MCF 10A (cell line): ENCODE measurements at regions of chr2 and their contacts with region 1.

Region 1: DNA sequence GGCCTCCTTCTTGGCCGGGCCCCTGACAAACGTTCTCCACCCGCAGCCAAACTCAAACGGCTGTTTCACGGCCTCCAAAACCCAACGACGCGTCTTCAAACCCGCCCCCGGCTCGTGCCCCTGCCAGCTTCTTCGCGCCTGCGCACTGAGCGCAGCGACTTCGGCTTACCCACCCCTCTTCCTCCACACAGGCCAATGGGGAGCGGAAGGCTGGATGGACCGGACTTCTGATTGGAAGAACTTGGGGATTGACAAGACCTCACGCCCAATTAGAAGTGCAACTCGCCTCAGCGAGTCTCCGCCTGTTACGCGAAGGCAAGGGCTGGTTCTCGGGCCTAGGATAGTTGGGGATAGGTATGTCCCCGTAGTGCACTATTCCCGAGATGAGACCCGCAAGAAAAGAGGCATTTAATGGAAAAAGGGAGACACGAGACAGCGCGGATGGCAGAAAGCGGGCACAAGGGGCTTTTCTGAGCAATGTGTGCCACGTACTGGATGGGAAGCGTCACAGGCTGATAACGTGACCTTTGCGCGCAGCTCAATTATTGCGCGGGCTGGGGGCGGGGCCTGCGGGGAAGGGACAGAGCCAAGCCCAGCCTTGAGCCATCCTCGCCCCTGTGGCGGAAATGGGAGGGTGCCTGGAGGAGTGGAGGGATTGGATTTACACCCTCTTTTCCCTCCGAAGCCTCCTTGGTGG is at the start of gene LAPTM4A:
- DNase-seq: peak; percentile 100
- H3K4me3 Mint-ChIP-seq: no peak within 1 kb of the TSS
- H3K27ac Mint-ChIP-seq: no peak within 1 kb of the TSS
- H3K4me1 Mint-ChIP-seq: peaks cover 24% of the 10 kb centered on the region
- H3K27me3 Mint-ChIP-seq: no peaks in the 10 kb centered on the region
- CTCF ChIP-seq: no peak
- total RNA-seq, gene LAPTM4A: 145 and 160 TPM in 2 replicates

Region 2: GRCh38 chr2:19989681-19990415 is 61.8 kb before region 1 on chr2 and contains the start of gene WDR35:
- CTCF ChIA-PET with region 1: no interaction called
- POLR2A ChIA-PET with region 1: interaction called, 33 read pairs
- intact Hi-C with region 1: no loop called
- DNase-seq: peak; percentile 90
- H3K4me3 Mint-ChIP-seq: peak within 1 kb of the TSS; percentile 95
- H3K27ac Mint-ChIP-seq: peak within 1 kb of the TSS; percentile 77
- H3K4me1 Mint-ChIP-seq: peaks cover 26% of the 10 kb centered on the region
- H3K27me3 Mint-ChIP-seq: no peaks in the 10 kb centered on the region
- CTCF ChIP-seq: no peak
- total RNA-seq, gene WDR35: 13.2 and 17.5 TPM in 2 replicates

Region 3: GRCh38 chr2:20040489-20041172 is 11.0 kb before region 1 on chr2:
- CTCF ChIA-PET with region 1: interaction called, 4 read pairs
- POLR2A ChIA-PET with region 1: interaction called, 96 read pairs
- intact Hi-C with region 1: no loop called
- DNase-seq: peak; percentile 47
- H3K4me3 Mint-ChIP-seq: no peak overlapping the region
- H3K27ac Mint-ChIP-seq: peak overlapping the region; percentile 47
- H3K4me1 Mint-ChIP-seq: peaks cover 20% of the 10 kb centered on the region
- H3K27me3 Mint-ChIP-seq: no peaks in the 10 kb centered on the region
- CTCF ChIP-seq: no peak

Region 4: DNA sequence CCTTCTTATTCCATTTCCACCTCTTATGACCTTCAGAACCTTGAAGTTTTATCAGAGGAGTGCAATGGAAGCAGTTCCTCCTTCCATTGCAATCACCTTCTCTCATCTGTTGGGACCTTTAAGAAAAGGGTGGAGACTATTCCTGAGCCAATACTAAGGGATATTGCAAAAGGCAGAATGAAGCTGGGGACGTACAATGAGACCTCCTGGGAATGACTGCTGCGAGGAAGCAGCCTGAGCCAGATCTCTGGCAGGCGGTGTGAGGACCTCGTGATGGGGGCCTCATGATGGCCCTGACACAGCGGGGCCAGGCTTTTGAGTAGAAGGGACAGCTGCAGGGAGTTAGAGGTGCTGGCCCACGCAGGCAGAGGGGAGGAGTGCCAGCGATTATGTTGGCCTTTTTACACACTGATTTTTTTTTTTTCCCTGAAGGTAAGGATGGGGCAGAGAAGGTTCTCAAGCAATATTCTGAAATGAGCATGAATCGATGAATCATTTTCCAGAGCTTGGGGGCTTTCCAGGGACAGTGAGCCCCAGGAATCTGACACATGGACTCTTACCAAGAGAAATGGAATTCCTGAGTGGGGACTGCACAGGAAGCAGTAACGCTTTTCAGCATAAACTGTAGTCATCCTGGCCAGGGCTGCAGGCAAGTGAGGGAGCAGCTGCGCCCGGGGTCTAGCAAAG is 39.8 kb after region 1 on chr2:
- CTCF ChIA-PET with region 1: interaction called, 6 read pairs
- POLR2A ChIA-PET with region 1: interaction called, 83 read pairs
- intact Hi-C with region 1: loop called (anchors 1 kb)
- DNase-seq: peak; percentile 71
- H3K4me3 Mint-ChIP-seq: peak overlapping the region; percentile 61
- H3K27ac Mint-ChIP-seq: peak overlapping the region; percentile 49
- H3K4me1 Mint-ChIP-seq: peaks cover 41% of the 10 kb centered on the region
- H3K27me3 Mint-ChIP-seq: no peaks in the 10 kb centered on the region
- CTCF ChIP-seq: no peak

Region 5: DNA sequence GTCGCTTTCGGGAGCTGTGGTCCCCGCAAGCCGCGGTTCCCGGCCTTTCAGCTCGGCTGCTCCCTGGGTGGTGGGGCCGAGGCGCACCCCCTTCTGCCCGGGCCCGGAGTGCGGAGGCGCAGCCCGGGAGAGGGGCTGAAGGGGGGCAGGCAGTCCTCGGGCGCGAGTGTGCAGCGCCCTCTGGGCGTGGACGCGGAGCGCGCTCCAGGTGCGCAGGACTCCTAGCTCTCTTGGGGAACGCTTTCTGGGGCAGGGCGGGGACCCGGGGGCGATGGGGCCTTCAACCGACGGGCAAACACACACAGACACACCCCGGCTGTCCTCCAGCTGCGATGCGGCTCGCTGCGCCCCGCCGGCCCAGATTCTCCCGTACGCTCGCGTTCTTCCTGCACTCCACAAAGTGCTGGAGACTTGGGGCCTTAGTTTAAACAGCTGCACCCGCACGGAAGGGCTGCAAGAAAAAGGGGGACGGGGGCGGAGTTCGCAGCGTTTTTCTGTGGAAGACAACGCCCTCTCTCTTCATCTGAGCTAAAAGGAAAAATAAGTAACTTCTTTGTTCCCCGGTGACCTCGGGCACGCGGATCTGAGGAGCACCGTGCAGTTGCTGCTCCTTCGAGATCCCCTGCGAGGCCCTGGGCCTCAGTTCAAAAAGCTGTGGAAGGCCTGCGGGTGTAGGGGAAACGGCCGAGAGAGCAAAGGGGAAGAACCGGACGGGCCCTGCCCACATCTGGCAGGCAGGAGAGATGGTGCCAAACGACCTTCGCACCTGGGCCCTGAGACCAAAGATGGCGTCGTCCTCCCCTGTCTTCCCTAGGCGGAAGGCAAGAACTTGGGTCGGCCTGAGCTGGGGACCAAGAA is 173.8 kb after region 1 on chr2:
- CTCF ChIA-PET with region 1: interaction called, 4 read pairs
- POLR2A ChIA-PET with region 1: interaction called, 22 read pairs
- intact Hi-C with region 1: no loop called
- DNase-seq: peak; percentile 81
- H3K4me3 Mint-ChIP-seq: peak overlapping the region; percentile 75
- H3K27ac Mint-ChIP-seq: peak overlapping the region; percentile 59
- H3K4me1 Mint-ChIP-seq: peaks cover 25% of the 10 kb centered on the region
- H3K27me3 Mint-ChIP-seq: no peaks in the 10 kb centered on the region
- CTCF ChIP-seq: peak; percentile 79

Region 6: DNA sequence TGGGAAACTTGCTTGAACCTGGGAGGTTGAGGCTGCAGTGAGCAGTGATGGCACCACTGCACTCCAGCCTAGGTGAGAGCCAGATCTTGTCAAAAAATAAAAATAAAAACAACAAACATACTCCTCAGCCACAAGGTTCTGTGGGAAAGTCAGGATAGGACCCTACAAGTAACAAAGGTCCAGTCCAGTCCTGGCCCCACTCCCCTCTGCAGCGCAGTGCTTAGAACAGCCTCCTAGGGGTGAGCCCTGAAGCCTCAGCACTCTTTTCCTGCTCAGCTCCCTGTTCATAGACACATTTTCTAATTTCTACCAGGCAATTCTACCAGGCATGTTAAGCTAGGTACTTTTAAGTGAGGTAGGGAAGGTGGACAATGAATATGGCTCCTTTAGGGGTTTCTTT is 195.4 kb after region 1 on chr2:
- CTCF ChIA-PET with region 1: no interaction called
- POLR2A ChIA-PET with region 1: no interaction called
- intact Hi-C with region 1: no loop called
- DNase-seq: no peak
- H3K4me3 Mint-ChIP-seq: no peak overlapping the region
- H3K27ac Mint-ChIP-seq: no peak overlapping the region
- H3K4me1 Mint-ChIP-seq: peaks cover 5% of the 10 kb centered on the region
- H3K27me3 Mint-ChIP-seq: no peaks in the 10 kb centered on the region
- CTCF ChIP-seq: no peak